Activated T-helper 2 cell treated with anti-CD3 and anti-CD28 coated beads, Interferon-gamma antibody, Interleukin-2, Interleukin-4, amounts not matched to agents 10 μg/mL and 5 μg/mL and 100 μg/mL, durations not matched to agents 14 hours and 24 hours and 36 hours (primary cell): ENCODE measurements at regions of chr1 and their contacts with region 1.

Region 1: DNA sequence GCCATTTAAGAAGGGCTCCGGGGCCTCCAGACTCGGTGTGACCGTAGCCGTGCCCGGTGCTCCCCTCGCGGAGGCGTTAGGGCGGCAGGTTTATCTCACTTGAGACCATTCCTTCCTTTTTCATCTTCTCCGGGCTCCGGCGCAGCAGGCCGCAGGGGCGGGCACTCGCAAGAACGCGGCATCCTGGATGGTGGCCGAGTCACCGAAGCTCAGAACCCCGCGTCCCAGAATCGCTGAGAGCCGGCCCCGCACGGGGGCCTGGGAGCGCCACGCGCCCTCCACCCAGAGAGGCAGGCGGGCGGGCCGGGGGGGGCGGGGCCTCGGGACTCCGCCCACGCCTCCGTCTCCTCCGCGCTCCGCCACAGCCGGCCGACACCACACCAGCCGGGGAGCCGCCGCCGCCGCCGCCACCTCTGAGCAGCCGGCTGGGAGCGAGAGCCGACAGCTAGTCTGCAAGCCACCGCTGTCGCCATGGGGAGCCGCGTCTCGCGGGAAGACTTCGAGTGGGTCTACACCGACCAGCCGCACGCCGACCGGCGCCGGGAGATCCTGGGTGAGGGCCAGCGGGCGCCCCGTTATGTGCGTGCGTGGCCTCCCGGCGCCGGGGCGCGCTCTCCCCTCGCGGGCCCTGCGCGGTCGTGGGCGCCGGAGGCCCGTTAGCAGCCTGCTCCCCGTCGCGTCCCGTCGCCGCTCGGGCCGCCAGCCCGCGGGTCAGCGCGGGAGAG is at the start of gene DEGS1:
- DNase-seq: peak; percentile 81
- H3K4me3 Mint-ChIP-seq: peak within 1 kb of the TSS; percentile 93
- H3K27ac Mint-ChIP-seq: peak within 1 kb of the TSS; percentile 85
- H3K4me1 Mint-ChIP-seq: peaks cover 39% of the 10 kb centered on the region
- H3K27me3 Mint-ChIP-seq: peaks cover 6% of the 10 kb centered on the region
- total RNA-seq, gene DEGS1: 49.7 and 51.1 TPM in 2 replicates

Region 2: DNA sequence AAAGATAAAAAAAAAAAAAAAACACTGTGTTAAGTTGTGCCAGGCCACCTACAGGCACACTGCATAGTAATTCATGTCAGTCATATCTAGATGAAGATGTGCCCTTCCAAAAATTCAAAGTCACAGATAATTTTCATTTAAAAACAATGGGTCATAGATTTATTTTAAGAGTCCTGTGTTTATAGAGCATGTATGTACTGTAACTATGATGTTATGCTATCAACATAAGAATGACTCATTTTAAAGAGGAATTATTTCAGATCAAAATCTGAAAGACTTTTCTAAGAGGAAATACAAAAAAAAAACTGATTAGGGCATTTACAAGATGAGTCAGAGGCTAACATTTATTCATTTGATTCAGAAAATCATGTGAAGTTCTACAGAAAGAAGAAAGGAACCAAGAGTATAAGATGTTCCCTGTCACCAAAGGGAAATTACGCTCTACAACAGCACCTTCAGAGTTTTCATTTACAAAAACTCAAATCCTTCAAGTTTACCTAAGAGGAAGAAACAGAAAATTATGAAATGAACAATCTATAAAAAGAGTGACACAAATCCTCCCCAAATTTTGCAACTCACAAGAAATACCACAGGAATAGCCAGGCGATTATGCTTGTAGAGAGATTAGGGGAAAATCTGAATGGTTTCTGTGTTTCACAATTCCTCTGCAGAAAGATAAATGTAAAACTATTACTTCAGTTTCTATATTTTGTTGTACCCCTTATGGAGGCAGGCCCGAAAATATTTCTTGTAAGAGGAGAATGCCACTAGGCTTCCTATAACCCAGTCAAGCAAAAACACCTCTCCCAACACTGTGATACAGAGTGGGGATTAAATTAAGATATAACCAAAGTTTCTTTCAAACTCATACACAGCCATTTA is 351.0 kb before region 1 on chr1:
- intact Hi-C with region 1: loop called (anchors 10 kb)
- DNase-seq: no peak
- H3K4me3 Mint-ChIP-seq: peak overlapping the region; percentile 54
- H3K27ac Mint-ChIP-seq: peak overlapping the region; percentile 92
- H3K4me1 Mint-ChIP-seq: peaks cover 24% of the 10 kb centered on the region
- H3K27me3 Mint-ChIP-seq: no peaks in the 10 kb centered on the region

Region 3: DNA sequence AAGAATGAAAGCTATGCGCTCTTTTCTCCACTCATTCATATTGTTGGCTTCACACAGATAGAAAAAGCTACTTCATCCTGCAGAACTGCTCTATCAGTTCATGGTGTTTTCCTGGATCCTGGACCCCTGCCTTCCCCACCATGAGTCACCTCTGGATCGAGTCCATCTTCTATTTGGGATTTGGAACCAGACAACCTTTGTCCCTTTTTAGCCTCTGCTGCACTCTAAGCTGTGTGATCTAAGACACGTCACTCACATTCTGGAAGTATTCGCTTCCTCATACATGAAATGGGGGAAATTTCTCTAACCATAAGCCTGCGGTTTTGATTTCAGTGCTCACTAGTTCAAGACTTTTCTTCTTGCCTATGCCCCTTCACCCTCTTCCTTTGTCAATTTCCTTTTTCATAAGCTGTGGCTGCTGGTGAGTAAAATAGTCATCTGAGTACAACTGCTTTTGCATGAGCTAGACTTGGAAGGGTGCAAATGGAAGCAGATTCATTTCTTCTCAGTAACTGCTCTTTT is 14.1 kb before region 1 on chr1:
- intact Hi-C with region 1: loop called (anchors 1 kb)
- DNase-seq: peak; percentile 37
- H3K4me3 Mint-ChIP-seq: peak overlapping the region; percentile 50
- H3K27ac Mint-ChIP-seq: peak overlapping the region; percentile 83
- H3K4me1 Mint-ChIP-seq: peaks cover 36% of the 10 kb centered on the region
- H3K27me3 Mint-ChIP-seq: peaks cover 7% of the 10 kb centered on the region

Region 4: DNA sequence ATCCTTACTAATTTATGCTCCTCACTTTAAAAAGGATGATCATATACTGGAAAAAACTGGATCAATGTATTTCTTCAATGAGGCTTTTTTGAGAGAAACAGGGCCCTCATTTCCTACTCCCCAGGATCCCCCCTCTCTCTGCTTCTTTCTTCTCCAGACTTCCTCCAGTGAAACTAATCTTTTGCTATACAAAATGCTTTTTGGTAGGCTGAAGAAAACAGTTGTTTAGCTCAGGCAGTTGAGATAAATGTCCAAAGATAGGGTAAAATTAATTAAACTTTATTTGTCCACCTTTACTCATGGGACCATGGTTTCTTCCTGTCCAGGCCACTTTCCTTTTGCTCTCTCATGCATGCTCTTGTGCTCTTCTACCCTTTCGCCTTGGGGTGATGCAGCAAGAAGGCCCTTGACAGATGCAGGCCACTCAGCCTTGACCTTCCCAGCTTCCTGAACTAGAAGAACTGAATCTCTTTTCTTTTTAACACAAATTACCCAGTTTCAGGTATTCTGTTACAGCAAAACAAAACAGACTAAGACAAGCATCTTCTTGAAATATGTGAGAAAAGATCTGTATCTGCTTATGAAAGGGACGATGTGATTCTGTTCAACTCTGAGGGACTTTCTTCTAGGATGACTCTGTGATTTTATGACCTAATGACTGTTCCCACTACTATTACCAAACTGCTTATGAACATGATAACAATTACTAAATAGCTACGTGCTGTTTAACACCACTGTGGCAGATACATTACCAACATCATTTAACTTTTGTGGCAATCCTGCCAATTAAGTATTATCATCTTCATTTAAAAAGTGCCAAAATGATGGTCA is 83.3 kb after region 1 on chr1:
- intact Hi-C with region 1: loop called (anchors 1 kb)
- DNase-seq: no peak
- H3K4me3 Mint-ChIP-seq: peak overlapping the region; percentile 3
- H3K27ac Mint-ChIP-seq: peak overlapping the region; percentile 82
- H3K4me1 Mint-ChIP-seq: peaks cover 38% of the 10 kb centered on the region
- H3K27me3 Mint-ChIP-seq: no peaks in the 10 kb centered on the region

Region 5: DNA sequence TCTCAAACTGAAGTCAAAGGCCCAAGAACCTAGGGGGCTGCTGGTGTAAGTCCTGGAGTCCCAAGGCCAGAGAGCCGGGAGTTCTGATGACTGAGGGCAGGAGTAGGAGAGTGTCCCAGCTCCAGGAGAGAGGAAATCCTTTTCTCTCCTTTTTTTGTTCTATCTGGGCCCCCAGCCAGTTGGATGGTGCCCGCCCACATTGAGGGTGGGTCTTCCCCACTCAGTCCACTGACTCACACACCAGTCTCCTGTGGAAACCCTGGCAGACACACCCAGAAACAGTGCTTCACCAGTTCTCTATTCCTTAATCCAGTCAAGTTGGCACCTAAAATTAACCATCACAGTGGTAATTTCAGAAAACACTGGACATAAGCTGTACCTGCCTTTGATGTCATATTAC is 264.2 kb after region 1 on chr1:
- intact Hi-C with region 1: no loop called
- DNase-seq: no peak
- H3K4me3 Mint-ChIP-seq: no peak overlapping the region
- H3K27ac Mint-ChIP-seq: no peak overlapping the region
- H3K4me1 Mint-ChIP-seq: peaks cover 9% of the 10 kb centered on the region
- H3K27me3 Mint-ChIP-seq: no peaks in the 10 kb centered on the region

Region 6: GRCh38 chr1:224497714-224498573 is 314.9 kb after region 1 on chr1:
- intact Hi-C with region 1: loop called (anchors 5 kb)
- DNase-seq: peak; percentile 68
- H3K4me3 Mint-ChIP-seq: peak overlapping the region; percentile 60
- H3K27ac Mint-ChIP-seq: peak overlapping the region; percentile 96
- H3K4me1 Mint-ChIP-seq: peaks cover 52% of the 10 kb centered on the region
- H3K27me3 Mint-ChIP-seq: no peaks in the 10 kb centered on the region